Naive thymus-derived CD4-positive, alpha-beta T cell (primary cell): ENCODE measurements at regions of chr13 and their contacts with region 1.

Region 1: DNA sequence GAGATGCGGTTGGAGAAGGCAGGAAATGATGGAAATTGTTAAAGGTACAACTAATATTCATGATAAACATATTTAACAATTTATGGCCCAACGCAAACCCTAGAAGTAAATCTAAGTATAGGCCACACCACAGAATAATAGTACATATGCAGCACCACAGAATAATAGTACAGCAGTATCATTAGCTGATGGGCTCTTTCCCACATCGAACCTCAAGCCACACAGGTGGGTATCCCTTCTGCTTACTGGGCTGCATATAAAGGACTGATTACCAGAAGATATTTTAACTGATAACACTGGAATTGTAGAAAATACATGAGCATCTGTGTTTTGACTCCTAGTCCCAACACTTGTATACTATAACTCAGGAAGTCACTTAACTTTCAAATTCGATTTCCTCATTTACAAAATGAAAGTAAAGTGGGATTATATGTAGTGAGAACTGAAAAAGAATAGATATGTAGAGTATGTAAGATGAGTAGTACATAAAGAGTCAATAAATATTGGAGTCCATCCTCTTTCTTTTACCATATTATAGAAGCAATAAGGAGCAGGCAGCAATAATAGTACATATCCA is 91.5 kb downstream of the TSC22D1 start:
- DNase-seq: no peak
- ATAC-seq: no peak
- H3K4me3 ChIP-seq: peak overlapping the region; percentile 38
- H3K4me3 Mint-ChIP-seq: peak overlapping the region; percentile 13 to 77 (median 72)
- H3K27ac ChIP-seq: peak overlapping the region; percentile 22
- H3K27ac Mint-ChIP-seq: peak overlapping the region in 8 of 9 donors; percentile 1 to 73 (median 52)
- H3K4me1 ChIP-seq: peaks cover 7 to 16% of the 10 kb centered on the region in 2 donors
- H3K4me1 Mint-ChIP-seq: peaks cover 6 to 25% (median 14%) of the 10 kb centered on the region in 7 donors
- H3K27me3 ChIP-seq: no peaks in the 10 kb centered on the region
- H3K27me3 Mint-ChIP-seq: no peaks in the 10 kb centered on the region

Region 2: DNA sequence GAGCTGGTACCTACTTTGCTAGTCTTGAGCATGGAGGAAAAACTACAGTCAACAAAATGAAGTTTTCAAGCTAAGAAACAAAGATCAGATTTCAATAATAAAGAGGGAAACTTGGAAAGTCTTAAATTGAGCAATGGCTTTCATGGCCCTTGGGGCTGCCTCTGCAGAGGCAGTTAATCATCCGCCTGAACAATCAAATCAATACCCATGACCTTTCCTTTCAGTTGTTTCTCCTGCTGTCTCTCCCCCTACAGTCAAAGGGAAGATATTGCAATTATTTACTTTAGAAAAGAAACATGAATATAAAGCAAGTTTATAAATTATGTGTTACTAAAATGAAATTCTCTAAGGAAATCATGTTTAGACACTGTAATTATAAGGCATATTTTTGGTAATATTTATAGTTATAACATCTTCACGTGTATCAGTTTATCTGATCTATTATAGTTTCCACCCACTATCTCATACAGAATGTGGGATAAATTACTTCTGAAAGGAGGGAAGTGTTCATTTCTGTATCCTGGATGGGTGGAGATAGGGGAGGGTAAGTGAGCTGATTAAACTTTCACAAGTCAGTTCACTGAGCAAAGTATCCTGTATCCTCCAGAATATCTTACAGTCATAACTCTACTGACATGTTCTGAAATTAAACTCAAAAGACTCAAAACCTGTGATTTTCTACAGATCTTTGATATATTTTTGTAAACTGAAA is 163.9 kb after region 1 on chr13:
- CTCF ChIA-PET with region 1: interaction called, 4 read pairs
- POLR2A ChIA-PET with region 1: no interaction called
- intact Hi-C with region 1: loop called (anchors 1 to 2 kb)
- DNase-seq: peak in 3 of 9 donors; percentile 6 to 15 (median 9)
- ATAC-seq: no peak
- H3K4me3 ChIP-seq: no peak overlapping the region
- H3K4me3 Mint-ChIP-seq: peak overlapping the region in 1 of 10 donors; percentile 18
- H3K27ac ChIP-seq: no peak overlapping the region
- H3K27ac Mint-ChIP-seq: peak overlapping the region in 1 of 9 donors; percentile 86
- H3K4me1 ChIP-seq: no peaks in the 10 kb centered on the region
- H3K4me1 Mint-ChIP-seq: peaks cover 0 to 14% (median 0%) of the 10 kb centered on the region in 7 donors
- H3K27me3 ChIP-seq: no peaks in the 10 kb centered on the region
- H3K27me3 Mint-ChIP-seq: peaks cover 0 to 15% (median 11%) of the 10 kb centered on the region in 5 donors

Region 3: GRCh38 chr13:44815623-44816022 is 331.0 kb after region 1 on chr13:
- CTCF ChIA-PET with region 1: no interaction called
- POLR2A ChIA-PET with region 1: no interaction called
- intact Hi-C with region 1: loop called (anchors 1 kb)
- DNase-seq: peak in 1 of 9 donors; percentile 49
- ATAC-seq: no peak
- H3K4me3 ChIP-seq: no peak overlapping the region
- H3K4me3 Mint-ChIP-seq: no peak overlapping the region
- H3K27ac ChIP-seq: no peak overlapping the region
- H3K27ac Mint-ChIP-seq: no peak overlapping the region
- H3K4me1 ChIP-seq: no peaks in the 10 kb centered on the region
- H3K4me1 Mint-ChIP-seq: peaks cover 0 to 16% (median 0%) of the 10 kb centered on the region in 7 donors
- H3K27me3 ChIP-seq: no peaks in the 10 kb centered on the region
- H3K27me3 Mint-ChIP-seq: peaks cover 0 to 20% (median 4%) of the 10 kb centered on the region in 5 donors

Region 4: GRCh38 chr13:44879463-44880058 is 394.9 kb after region 1 on chr13:
- CTCF ChIA-PET with region 1: no interaction called
- POLR2A ChIA-PET with region 1: no interaction called
- intact Hi-C with region 1: loop called (anchors 1 kb)
- DNase-seq: peak in 1 of 9 donors; percentile 4
- ATAC-seq: no peak
- H3K4me3 ChIP-seq: no peak overlapping the region
- H3K4me3 Mint-ChIP-seq: no peak overlapping the region
- H3K27ac ChIP-seq: no peak overlapping the region
- H3K27ac Mint-ChIP-seq: no peak overlapping the region
- H3K4me1 ChIP-seq: no peaks in the 10 kb centered on the region
- H3K4me1 Mint-ChIP-seq: no peaks in the 10 kb centered on the region
- H3K27me3 ChIP-seq: no peaks in the 10 kb centered on the region
- H3K27me3 Mint-ChIP-seq: peaks cover 9 to 14% (median 10%) of the 10 kb centered on the region in 5 donors

Region 5: GRCh38 chr13:44969551-44970484 is 485.2 kb after region 1 on chr13:
- CTCF ChIA-PET with region 1: interaction called, 35 read pairs
- POLR2A ChIA-PET with region 1: no interaction called
- intact Hi-C with region 1: loop called (anchors 1 kb)
- DNase-seq: peak in 5 of 9 donors; percentile 13 to 27 (median 18)
- ATAC-seq: peak; percentile 51
- H3K4me3 ChIP-seq: no peak overlapping the region
- H3K4me3 Mint-ChIP-seq: no peak overlapping the region
- H3K27ac ChIP-seq: no peak overlapping the region
- H3K27ac Mint-ChIP-seq: no peak overlapping the region
- H3K4me1 ChIP-seq: no peaks in the 10 kb centered on the region
- H3K4me1 Mint-ChIP-seq: no peaks in the 10 kb centered on the region
- H3K27me3 ChIP-seq: no peaks in the 10 kb centered on the region
- H3K27me3 Mint-ChIP-seq: no peaks in the 10 kb centered on the region

Region 6: GRCh38 chr13:44988973-44989817 is 504.5 kb after region 1 on chr13 and contains the starts of genes GPALPP1 and NUFIP1:
- CTCF ChIA-PET with region 1: no interaction called
- POLR2A ChIA-PET with region 1: no interaction called
- intact Hi-C with region 1: loop called in 1 of 2 experiments (anchors 1 kb)
- DNase-seq: peak; percentile 79 to 94 (median 90)
- ATAC-seq: peak; percentile 98
- H3K4me3 ChIP-seq: peak within 1 kb of the TSS; percentile 94
- H3K4me3 Mint-ChIP-seq: peak within 1 kb of the TSS; percentile 96 to 100 (median 98)
- H3K27ac ChIP-seq: peak within 1 kb of the TSS; percentile 95
- H3K27ac Mint-ChIP-seq: peak within 1 kb of the TSS; percentile 91 to 99 (median 98)
- H3K4me1 ChIP-seq: peaks cover 18 to 27% of the 10 kb centered on the region in 2 donors
- H3K4me1 Mint-ChIP-seq: peaks cover 42 to 81% (median 68%) of the 10 kb centered on the region in 7 donors
- H3K27me3 ChIP-seq: no peaks in the 10 kb centered on the region
- H3K27me3 Mint-ChIP-seq: no peaks in the 10 kb centered on the region
- total RNA-seq, gene GPALPP1: 29.7 to 43.1 (median 33.0) TPM
- total RNA-seq, gene NUFIP1: 3.7 to 6.6 (median 5.4) TPM